GM13977 (cell line): ENCODE measurements at regions of chr2 and their contacts with region 1.

Region 1: DNA sequence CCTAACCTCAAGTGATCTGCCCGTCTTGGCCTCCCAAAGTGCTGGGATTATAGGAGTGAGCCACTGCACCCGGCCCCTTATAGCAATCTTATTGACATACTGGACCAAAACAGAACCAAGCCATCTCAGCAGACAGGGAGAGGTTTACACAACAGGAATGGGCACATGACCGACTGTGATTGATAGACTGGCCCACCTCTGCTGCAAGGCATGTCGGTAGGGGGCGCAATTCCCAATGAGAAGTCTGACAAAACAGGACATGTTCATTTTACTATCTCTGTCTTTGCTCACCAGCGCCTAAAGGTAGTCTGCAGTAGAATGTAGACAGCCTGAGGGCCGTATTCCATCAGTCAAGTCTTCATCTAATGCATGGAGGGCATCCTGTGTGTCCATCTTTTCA is 2.0 kb downstream of the LYPD6B start:
- DNase-seq: peak; percentile 74
- CTCF ChIP-seq: peak; percentile 75

Region 2: DNA sequence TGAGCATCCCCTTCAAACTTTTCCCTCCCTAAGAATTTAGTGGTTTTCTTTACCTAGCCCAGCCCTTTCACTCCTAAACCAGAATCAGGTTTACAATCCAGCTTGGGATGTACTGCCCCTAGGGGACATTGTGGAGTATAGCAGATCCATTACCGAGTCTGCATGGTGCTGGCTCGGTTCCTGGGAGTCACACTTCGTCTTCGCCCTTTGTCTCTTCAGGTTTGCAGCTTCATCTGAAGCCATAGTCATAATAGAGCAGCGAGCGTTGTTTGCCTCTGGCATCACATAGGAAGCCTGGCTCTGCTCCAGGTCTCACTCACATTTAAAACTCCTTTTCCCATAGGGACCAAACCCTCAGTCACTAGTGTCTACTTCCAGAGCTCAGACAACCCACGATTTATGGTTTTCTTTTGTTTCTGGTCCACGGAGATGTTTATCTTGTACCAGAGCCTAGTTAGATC is 273.1 kb after region 1 on chr2:
- in situ Hi-C with region 1: loop called (anchors 25 kb)
- DNase-seq: peak; percentile 82
- CTCF ChIP-seq: peak; percentile 74